GM10248 (cell line): ENCODE measurements at regions of chr17 and their contacts with region 1.

Region 1: GRCh38 chr17:82022981-82023374 is at the start of gene LRRC45:
- DNase-seq: peak; percentile 99
- CTCF ChIP-seq: no peak

Region 2: DNA sequence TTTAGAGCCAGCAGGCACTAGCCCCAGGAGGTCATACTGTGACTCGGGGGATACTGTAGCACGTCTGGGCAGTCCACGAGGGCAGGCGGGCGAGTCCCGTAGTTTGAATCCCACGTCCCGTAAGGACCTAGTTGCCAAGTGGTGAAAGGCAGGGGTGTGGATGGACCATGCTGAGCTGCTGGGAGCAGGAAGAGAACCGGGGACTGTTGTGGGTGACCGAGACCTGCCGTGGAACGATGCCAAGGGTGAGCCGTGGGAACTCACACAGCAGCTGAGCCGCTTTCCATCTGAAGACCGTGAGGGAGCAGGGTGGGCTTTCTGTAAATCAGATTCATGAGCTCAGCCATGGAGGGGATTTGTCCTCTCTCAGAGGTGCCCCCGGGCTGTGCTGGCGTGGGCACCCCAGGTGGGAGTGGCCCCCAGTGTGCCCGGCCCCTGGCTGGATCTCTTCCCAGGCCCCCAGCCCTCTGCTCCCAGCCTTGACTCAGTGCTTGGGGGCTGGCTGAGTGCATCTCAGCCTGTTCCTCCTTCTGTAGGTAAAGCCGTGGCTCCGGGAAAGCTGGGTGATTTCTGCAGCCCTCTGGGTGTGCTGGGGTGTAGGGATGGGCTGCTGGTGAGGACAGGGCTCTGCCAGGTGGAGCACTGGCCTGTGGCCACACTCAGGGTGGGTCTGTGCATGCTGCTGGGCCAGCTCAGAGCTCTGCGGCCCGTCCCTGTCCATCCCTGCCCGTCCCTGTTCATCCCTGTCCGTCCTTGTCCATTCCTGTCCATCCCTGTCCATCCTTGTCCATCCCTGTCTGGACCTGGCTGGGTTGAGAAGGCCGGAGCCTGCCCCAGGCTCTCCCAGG is 31.9 kb before region 1 on chr17:
- CTCF ChIA-PET with region 1: no interaction called
- POLR2A ChIA-PET with region 1: no interaction called
- DNase-seq: no peak
- CTCF ChIP-seq: no peak

Region 3: DNA sequence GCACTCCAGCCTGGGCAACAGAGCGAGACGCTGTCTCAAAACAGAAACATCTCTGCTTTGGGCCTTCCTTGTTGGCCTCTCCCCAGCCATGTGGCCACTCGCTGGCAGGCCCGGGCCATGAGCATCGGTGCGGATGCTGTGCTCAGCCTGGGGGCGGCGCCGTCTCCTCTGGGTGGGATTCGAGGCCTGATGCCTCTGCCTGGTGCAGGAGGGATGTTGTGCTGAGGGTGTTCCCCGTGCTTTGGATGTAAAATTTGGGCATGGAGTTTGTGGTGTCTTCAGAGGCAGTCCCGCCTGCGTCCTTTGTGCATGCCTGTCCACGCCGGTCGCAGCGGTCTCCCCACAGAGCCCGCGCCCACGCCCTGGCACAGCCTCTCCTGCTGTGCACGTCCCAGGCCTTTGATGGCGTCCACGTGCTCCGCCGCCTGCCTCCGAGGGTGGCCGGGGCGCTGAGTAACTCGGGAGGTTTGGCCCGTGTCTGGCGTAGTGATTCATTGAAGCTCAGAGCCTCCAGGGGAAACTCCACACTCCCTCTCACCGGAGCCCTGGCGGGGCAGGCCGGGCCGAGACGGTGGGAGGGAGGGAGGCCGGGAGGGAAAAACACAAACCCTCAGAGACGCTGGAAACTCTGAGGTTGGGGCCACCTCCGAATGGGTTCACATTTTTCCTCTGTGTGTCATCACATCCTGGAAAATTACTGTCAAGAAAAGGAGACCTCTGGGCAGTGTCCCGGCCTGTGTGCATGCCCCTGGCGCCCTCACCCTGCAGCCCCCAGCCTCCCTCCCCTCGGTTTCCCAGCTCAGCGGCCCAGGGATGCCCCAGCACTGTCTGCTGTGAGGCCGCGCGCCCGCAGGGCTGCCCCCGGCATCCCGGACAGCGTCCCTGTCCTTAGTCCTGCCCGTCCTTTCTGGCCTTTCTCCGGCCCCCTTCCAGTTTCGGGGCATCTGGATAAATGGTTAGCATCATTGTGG is 19.3 kb before region 1 on chr17:
- CTCF ChIA-PET with region 1: interaction called, 14 read pairs
- POLR2A ChIA-PET with region 1: no interaction called
- DNase-seq: no peak
- CTCF ChIP-seq: no peak

Region 4: GRCh38 chr17:82008941-82009405 is 14.0 kb before region 1 on chr17:
- CTCF ChIA-PET with region 1: interaction called, 14 read pairs
- POLR2A ChIA-PET with region 1: no interaction called
- DNase-seq: no peak
- CTCF ChIP-seq: no peak

Region 5: GRCh38 chr17:82037113-82037888 is 14.3 kb after region 1 on chr17 and contains the start of gene DCXR:
- CTCF ChIA-PET with region 1: interaction called, 67 read pairs
- POLR2A ChIA-PET with region 1: interaction called, 14 read pairs
- DNase-seq: peak; percentile 98
- CTCF ChIP-seq: peak; percentile 93

Region 6: GRCh38 chr17:82051776-82052637 is 29.0 kb after region 1 on chr17 and contains the starts of genes GPS1 and RFNG:
- CTCF ChIA-PET with region 1: no interaction called
- POLR2A ChIA-PET with region 1: no interaction called
- DNase-seq: peak; percentile 94
- CTCF ChIP-seq: no peak

Region 7: GRCh38 chr17:82077617-82078358 is 54.8 kb after region 1 on chr17:
- CTCF ChIA-PET with region 1: no interaction called
- POLR2A ChIA-PET with region 1: no interaction called
- DNase-seq: no peak
- CTCF ChIP-seq: no peak

Region 8: DNA sequence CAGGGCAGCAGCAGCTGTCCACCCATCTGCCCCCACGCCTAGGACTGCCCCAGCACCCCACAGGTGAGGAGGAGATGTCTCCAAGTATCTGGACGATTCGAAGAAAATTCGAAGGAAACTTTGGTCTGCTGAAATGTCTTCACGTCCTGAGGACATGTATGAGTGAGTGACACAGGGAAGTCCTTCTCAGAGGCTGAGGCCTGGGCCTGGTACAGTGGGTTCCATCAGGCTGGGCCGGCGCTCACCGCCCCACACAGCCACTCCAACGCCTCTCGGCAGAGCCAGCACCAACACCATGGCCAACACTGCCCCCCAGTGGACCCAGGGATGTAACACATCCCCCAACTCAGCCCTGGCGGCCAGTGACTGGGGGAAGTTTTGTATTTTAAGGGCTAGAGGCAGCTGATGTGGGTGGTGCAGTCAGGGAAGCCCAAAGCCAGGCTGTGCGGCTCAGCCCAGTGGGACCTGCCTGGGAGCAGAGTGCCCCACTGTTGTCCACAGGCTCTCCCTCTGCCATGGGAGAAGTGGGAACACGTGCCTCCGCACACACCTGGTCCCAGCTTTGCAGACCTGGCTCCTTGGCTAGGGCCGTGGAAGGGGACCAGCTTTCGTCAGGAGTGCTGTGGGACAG is 130.9 kb after region 1 on chr17:
- CTCF ChIA-PET with region 1: interaction called, 87 read pairs
- POLR2A ChIA-PET with region 1: no interaction called
- DNase-seq: peak; percentile 92
- CTCF ChIP-seq: peak; percentile 94